CD4-positive, alpha-beta memory T cell (primary cell): ENCODE measurements at regions of chr1 and their contacts with region 1.

Region 1: DNA sequence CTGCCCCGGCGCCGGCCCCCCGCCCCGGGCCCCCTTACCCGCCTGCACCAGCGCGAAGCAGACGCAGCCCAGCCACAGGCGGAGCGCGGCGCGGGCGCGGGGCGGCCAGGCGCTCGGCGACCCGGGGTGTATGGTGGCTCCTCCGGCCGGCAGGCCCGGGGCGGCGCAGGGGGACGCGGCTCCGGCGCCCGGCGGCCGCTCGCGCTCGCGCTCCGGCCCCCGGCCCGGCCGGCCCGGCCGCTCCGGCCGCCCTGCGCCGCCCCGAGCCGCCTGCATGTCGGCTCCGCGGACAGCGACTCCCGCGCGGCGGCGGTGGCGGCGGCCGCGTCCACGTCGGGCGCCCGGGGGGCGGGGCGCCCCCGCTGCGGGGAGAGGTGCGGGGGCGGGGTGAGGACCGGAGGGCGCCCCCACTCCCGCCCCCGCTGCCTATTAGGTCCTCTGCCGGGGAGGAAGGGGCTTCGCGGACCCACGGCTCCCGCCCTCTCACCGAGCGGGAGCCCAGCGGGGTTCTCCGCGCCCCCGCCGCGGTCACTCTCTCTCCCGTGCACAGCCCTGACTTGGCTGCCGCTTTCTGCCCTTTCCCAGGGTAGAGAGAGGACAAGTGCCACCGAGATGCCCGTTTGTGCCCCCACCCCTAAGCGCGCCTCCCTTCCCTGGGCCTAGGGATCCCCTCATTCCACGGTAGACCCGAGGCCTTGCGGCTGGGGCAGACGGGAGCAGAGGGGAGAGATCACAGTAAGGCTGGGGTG is at the start of gene FNDC5:
- DNase-seq: no peak
- H3K4me3 ChIP-seq: no peak within 1 kb of the TSS
- H3K4me3 Mint-ChIP-seq: peak within 1 kb of the TSS; percentile 67 to 77 (median 76)
- H3K27ac ChIP-seq: no peak within 1 kb of the TSS
- H3K27ac Mint-ChIP-seq: peak within 1 kb of the TSS in 1 of 7 donors; percentile 42
- H3K4me1 ChIP-seq: peaks cover 4% of the 10 kb centered on the region
- H3K4me1 Mint-ChIP-seq: peaks cover 10 to 24% (median 17%) of the 10 kb centered on the region in 4 donors
- H3K27me3 ChIP-seq: peaks cover 12% of the 10 kb centered on the region
- H3K27me3 Mint-ChIP-seq: peaks cover 37 to 41% of the 10 kb centered on the region in 2 donors
- total RNA-seq, gene FNDC5: not detected

Region 2: GRCh38 chr1:32400876-32401631 is 469.7 kb before region 1 on chr1:
- CTCF ChIA-PET with region 1: interaction called, 3 read pairs
- POLR2A ChIA-PET with region 1: no interaction called
- intact Hi-C with region 1: loop called (anchors 2 kb)
- DNase-seq: peak in 4 of 5 donors; percentile 28 to 48 (median 35)
- H3K4me3 ChIP-seq: no peak overlapping the region
- H3K4me3 Mint-ChIP-seq: peak overlapping the region in 1 of 8 donors; percentile 54
- H3K27ac ChIP-seq: no peak overlapping the region
- H3K27ac Mint-ChIP-seq: peak overlapping the region in 1 of 7 donors; percentile 5
- H3K4me1 ChIP-seq: no peaks in the 10 kb centered on the region
- H3K4me1 Mint-ChIP-seq: peaks cover 0 to 1% (median 0%) of the 10 kb centered on the region in 4 donors
- H3K27me3 ChIP-seq: no peaks in the 10 kb centered on the region
- H3K27me3 Mint-ChIP-seq: peaks cover 1 to 2% of the 10 kb centered on the region in 2 donors

Region 3: DNA sequence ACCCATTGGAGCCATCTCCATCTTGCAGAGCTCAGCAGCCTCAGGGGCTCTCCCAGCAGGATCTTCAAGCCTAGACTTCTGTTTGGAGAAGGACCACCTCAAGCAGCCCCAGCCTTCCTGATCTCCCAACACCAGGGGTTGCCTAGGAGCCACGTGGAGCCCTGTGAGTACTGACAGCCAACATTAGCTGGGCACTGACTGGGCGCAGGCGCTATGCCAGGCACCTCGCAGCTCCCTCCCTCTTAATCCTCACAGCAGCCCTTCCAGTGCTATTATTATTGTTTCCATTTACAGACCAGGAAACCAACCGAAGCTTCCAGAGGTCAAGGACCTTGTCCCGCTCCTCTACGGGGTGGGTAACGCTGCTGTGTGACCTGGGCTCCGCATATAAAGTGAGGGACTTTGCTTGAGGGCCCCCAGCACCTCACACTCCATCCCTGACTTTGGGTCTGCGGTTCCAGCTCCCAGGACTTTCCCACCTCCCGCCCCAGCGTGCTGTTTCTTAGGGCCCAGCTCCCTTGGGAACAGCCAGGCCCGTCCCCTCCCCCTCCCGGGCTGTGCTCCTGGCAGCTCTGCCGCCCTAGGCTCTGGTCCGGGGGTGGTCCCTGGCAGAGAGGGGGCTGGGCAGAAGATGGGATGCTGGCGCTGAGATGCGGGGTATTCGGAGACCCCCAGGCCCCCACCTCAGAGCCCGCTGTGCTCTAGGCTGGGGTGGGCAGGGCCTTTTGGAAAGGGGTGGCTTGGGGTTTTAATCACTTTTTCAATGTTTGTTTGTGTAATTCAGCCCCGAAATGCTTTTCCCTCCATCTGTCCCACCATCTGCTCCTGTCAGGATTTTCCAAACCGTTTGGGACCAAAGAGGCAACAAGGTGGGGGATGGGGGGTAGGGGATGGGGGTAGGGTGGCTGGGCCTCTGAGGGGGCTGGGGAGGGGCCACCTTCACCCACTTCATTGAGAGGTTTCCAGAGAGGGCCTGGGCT is 11.4 kb after region 1 on chr1:
- CTCF ChIA-PET with region 1: interaction called, 10 read pairs
- POLR2A ChIA-PET with region 1: no interaction called
- intact Hi-C with region 1: no loop called
- DNase-seq: no peak
- H3K4me3 ChIP-seq: no peak overlapping the region
- H3K4me3 Mint-ChIP-seq: no peak overlapping the region
- H3K27ac ChIP-seq: no peak overlapping the region
- H3K27ac Mint-ChIP-seq: no peak overlapping the region
- H3K4me1 ChIP-seq: no peaks in the 10 kb centered on the region
- H3K4me1 Mint-ChIP-seq: peaks cover 3 to 10% (median 8%) of the 10 kb centered on the region in 4 donors
- H3K27me3 ChIP-seq: peaks cover 7% of the 10 kb centered on the region
- H3K27me3 Mint-ChIP-seq: peaks cover 17 to 33% of the 10 kb centered on the region in 2 donors